ENCODE measurements at regions of chr5 and their contacts with region 1.

Region 1: DNA sequence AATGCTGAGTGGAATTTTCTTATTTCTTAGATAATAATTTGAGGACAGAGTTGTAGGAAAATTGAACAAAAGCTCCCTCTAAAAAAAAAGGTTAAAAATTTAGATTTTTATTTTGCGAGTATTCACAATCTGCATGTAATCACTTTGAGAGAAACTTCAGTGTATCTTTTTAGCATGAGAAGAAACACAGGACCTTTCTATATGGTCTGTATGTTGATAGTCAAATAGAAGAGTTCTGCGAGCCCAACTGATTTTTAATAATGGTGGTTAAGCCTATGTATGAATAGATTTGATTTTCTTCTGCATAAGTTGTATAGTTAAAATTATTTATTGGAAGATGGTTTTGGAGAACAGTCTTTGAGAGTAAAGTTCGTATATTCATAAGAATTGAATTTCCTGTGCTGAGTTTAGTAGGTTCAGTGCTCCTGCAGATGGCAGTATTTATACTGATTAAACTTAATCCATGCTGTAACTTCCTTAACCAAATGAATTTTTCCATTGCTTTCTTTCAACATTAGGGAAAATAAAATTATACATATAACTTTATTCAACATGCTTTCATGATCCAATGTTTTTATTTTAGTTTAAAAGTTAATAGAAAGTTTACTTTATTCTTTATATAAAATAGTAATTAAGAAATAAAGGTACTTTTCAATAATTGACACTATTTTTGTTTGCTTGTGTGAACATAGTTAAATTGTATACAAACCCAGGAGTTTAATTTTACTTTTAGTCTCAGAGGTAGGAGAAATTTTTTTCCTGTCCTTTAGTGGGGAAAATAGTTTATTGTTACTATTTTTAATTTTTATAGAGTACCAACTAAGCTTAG is 19.6 kb downstream of the TCERG1 start:
- H3K4me3 Mint-ChIP-seq: no peak overlapping the region
- H3K27ac Mint-ChIP-seq: no peak overlapping the region
- H3K4me1 Mint-ChIP-seq: no peaks in the 10 kb centered on the region
- H3K27me3 Mint-ChIP-seq: no peaks in the 10 kb centered on the region

Region 2: GRCh38 chr5:146124580-146124979 is 342.2 kb before region 1 on chr5:
- intact Hi-C with region 1: loop called (anchors 10 kb)
- H3K4me3 Mint-ChIP-seq: no peak overlapping the region
- H3K27ac Mint-ChIP-seq: no peak overlapping the region
- H3K4me1 Mint-ChIP-seq: no peaks in the 10 kb centered on the region
- H3K27me3 Mint-ChIP-seq: no peaks in the 10 kb centered on the region

Region 3: DNA sequence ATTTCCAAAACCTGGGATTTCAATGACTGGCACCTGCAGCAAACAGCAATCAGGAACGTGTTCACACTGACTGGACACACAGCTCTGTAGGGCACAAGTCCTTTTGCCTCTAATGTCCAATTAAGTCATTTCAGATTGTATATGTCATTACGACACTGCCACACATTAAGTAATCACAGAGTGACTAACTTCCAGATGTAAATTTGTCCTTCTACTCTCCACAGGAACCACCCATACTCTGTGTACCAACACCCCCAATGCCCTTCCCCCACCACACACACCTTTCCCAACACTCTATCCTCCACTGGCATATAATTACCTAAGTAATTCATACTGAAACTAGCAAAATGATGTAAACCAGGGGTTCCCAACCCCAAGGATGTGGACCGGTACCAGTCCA is 314.8 kb before region 1 on chr5:
- intact Hi-C with region 1: loop called (anchors 10 kb)
- H3K4me3 Mint-ChIP-seq: no peak overlapping the region
- H3K27ac Mint-ChIP-seq: no peak overlapping the region
- H3K4me1 Mint-ChIP-seq: no peaks in the 10 kb centered on the region
- H3K27me3 Mint-ChIP-seq: no peaks in the 10 kb centered on the region

Region 4: DNA sequence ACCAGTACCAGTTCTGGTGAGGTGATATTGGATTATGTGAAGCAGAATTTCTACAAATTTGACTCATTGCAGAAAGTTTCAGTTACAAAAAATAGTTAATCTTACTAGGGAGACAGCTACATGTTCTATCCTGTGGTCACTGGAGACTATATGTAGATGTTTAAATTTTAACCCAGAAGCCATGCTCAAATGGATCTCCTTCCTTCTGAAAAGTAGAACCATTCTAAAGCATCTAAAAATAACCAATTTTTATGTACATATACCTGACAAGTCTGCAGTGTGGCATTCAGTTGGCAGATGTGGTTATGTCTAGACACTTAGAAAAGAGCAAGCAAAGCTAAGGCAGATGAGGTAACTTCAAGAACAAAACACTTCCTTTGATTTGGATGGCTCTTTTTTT is 193.6 kb before region 1 on chr5:
- intact Hi-C with region 1: loop called (anchors 10 kb)
- H3K4me3 Mint-ChIP-seq: no peak overlapping the region
- H3K27ac Mint-ChIP-seq: no peak overlapping the region
- H3K4me1 Mint-ChIP-seq: no peaks in the 10 kb centered on the region
- H3K27me3 Mint-ChIP-seq: no peaks in the 10 kb centered on the region

Region 5: GRCh38 chr5:146398826-146399225 is 67.9 kb before region 1 on chr5:
- intact Hi-C with region 1: no loop called
- H3K4me3 Mint-ChIP-seq: no peak overlapping the region
- H3K27ac Mint-ChIP-seq: no peak overlapping the region
- H3K4me1 Mint-ChIP-seq: peaks cover 24% of the 10 kb centered on the region
- H3K27me3 Mint-ChIP-seq: no peaks in the 10 kb centered on the region

Region 6: DNA sequence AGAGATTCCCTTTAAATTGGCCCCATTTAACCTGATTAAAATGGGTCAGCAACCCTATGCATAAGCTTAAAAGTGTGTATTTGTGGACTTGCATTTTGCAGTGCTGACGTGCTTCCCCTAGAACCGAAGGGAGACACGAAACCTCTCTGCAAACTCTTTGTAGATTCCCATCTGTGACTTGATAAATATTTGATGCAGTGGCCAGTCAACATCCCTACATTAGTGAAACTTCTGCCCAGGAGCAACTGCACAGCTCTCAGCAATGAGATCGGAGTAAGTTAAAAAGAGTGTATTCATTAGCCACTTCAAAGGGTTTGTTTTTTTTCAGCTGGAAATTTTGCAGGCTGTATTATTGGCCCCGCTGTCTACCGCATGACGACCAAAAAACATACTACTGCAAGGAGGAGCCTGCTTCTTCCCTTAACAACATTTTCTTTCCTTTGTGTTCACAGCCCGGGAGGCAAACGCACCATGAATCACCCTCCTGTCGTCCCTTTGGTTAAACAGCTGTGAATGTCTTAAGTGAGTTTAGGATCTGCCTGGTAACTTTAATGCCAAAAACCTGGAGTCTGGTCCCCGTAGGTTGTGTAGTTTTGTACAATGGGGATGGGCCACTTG is 57.6 kb before region 1 on chr5:
- intact Hi-C with region 1: no loop called
- H3K4me3 Mint-ChIP-seq: no peak overlapping the region
- H3K27ac Mint-ChIP-seq: no peak overlapping the region
- H3K4me1 Mint-ChIP-seq: no peaks in the 10 kb centered on the region
- H3K27me3 Mint-ChIP-seq: no peaks in the 10 kb centered on the region

Measured in dendritic cell treated with granulocyte-macrophage colony-stimulating factor and Interleukin-4, amounts not matched to agents 40 ng/mL and 50 ng/mL, for 4 days (primary cell).